ENCODE measurements at regions of chr7 and their contacts with region 1.

Region 1: GRCh38 chr7:36677769-36678437 is 46.4 kb downstream of the AOAH start:
- DNase-seq: peak; percentile 91
- ATAC-seq: peak; percentile 88
- H3K4me3 Mint-ChIP-seq: peak overlapping the region; percentile 56
- H3K27ac Mint-ChIP-seq: peak overlapping the region; percentile 94
- H3K4me1 Mint-ChIP-seq: peaks cover 76% of the 10 kb centered on the region
- H3K27me3 Mint-ChIP-seq: no peaks in the 10 kb centered on the region
- CTCF ChIP-seq: no peak

Region 2: GRCh38 chr7:36690514-36691187 is 12.7 kb after region 1 on chr7:
- CTCF ChIA-PET with region 1: interaction called, 6 read pairs
- POLR2A ChIA-PET with region 1: interaction called, 13 read pairs
- intact Hi-C with region 1: no loop called
- DNase-seq: peak; percentile 38
- ATAC-seq: peak; percentile 54
- H3K4me3 Mint-ChIP-seq: peak overlapping the region; percentile 28
- H3K27ac Mint-ChIP-seq: peak overlapping the region; percentile 92
- H3K4me1 Mint-ChIP-seq: peaks cover 66% of the 10 kb centered on the region
- H3K27me3 Mint-ChIP-seq: no peaks in the 10 kb centered on the region
- CTCF ChIP-seq: no peak

Region 3: GRCh38 chr7:36784991-36785940 is 107.4 kb after region 1 on chr7:
- CTCF ChIA-PET with region 1: interaction called, 4 read pairs
- POLR2A ChIA-PET with region 1: no interaction called
- intact Hi-C with region 1: loop called (anchors 5 kb)
- DNase-seq: peak; percentile 73
- ATAC-seq: peak; percentile 86
- H3K4me3 Mint-ChIP-seq: peak overlapping the region; percentile 14
- H3K27ac Mint-ChIP-seq: peak overlapping the region; percentile 80
- H3K4me1 Mint-ChIP-seq: peaks cover 77% of the 10 kb centered on the region
- H3K27me3 Mint-ChIP-seq: no peaks in the 10 kb centered on the region
- CTCF ChIP-seq: no peak

Measured in activated CD8-positive, alpha-beta T cell treated with anti-CD3 and anti-CD28 coated beads for 36 hours (primary cell).